ENCODE measurements at regions of chr15 and their contacts with region 1.

Region 1: DNA sequence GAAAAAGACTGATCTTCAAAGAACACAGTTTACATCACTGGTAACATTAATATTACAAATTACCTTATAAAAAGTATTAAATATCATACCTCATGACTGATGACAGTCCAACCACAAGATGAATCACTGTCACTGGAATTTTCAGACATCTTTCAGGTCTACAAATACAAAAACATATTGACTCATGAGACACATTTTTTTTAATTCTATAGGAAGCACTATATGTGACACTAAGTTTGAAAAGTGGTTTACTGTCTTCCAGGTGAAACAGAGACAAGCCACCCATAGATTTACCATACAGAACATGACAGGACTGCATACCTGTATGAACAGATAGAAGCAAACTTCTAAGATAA is 18.9 kb downstream of the CCPG1 start:
- DNase-seq: peak; percentile 45
- H3K4me3 Mint-ChIP-seq: no peak overlapping the region
- H3K27ac Mint-ChIP-seq: peak overlapping the region; percentile 75
- H3K4me1 Mint-ChIP-seq: peaks cover 14% of the 10 kb centered on the region
- H3K27me3 Mint-ChIP-seq: no peaks in the 10 kb centered on the region
- CTCF ChIP-seq: no peak

Region 2: DNA sequence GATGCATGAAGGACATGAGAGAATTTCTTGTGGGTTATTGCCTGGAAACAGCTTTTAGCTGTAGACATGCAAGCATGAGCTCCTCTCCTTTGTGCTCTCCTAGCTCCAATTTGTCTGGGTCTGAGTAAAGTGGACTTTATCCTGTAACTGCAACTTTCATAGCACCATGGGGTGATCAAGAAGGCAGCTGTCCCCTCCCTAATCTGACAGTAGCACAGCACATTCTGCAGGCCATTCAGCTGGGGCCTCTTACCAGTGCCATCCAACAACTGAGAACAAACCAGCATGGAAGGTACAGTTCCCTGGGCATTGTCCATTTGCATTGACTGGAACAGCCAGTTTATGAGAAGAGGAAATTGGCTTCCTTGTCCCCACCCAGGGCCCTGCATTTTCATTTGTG is 91.9 kb before region 1 on chr15:
- CTCF ChIA-PET with region 1: no interaction called
- POLR2A ChIA-PET with region 1: no interaction called
- intact Hi-C with region 1: no loop called
- DNase-seq: no peak
- H3K4me3 Mint-ChIP-seq: no peak overlapping the region
- H3K27ac Mint-ChIP-seq: no peak overlapping the region
- H3K4me1 Mint-ChIP-seq: no peaks in the 10 kb centered on the region
- H3K27me3 Mint-ChIP-seq: no peaks in the 10 kb centered on the region
- CTCF ChIP-seq: no peak

Region 3: GRCh38 chr15:55349282-55349681 is 40.0 kb before region 1 on chr15:
- CTCF ChIA-PET with region 1: no interaction called
- POLR2A ChIA-PET with region 1: no interaction called
- intact Hi-C with region 1: no loop called
- DNase-seq: no peak
- H3K4me3 Mint-ChIP-seq: no peak overlapping the region
- H3K27ac Mint-ChIP-seq: no peak overlapping the region
- H3K4me1 Mint-ChIP-seq: no peaks in the 10 kb centered on the region
- H3K27me3 Mint-ChIP-seq: no peaks in the 10 kb centered on the region
- CTCF ChIP-seq: no peak

Region 4: DNA sequence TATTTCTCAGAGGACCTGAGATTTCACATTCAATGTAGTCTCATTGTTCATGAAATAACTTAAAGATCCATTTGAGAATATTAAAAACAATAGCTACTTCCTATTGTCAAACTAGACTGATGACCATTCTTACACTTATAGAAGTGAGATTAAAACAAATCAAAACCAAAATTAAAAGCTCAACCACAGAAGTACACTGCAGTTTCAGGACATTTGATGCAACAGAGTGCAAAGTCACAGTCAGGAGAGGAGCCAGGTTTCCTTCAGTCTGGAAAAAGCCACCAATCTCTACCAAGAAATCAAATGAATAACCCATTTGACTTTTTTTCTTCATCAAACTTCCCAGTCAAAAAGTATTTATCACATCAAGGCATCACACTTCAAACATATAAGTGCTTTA is 13.5 kb after region 1 on chr15:
- CTCF ChIA-PET with region 1: interaction called, 16 read pairs
- POLR2A ChIA-PET with region 1: interaction called, 11 read pairs
- intact Hi-C with region 1: no loop called
- DNase-seq: no peak
- H3K4me3 Mint-ChIP-seq: no peak overlapping the region
- H3K27ac Mint-ChIP-seq: peak overlapping the region; percentile 85
- H3K4me1 Mint-ChIP-seq: peaks cover 29% of the 10 kb centered on the region
- H3K27me3 Mint-ChIP-seq: no peaks in the 10 kb centered on the region
- CTCF ChIP-seq: no peak

Region 5: DNA sequence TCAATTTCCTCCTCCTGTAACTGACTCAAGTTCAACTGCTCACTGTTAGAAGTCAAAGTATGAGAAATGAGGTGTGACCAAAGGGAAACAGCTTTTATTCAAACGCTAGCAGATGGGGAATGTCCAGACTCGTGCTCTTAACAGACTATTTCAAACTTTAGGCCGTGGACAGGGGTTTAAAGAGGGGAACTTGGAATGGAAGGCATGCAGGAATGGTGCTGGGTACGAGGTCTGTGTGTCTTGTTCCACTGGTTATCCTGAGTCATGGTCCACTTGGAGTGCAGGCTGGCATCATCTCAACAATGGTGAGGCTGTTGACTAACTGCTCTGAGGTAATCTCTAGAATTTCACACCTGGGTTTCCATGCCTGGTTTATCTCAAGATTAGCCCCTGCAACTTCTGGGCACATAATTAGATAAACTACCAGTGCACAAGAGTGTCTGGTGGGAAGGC is 141.6 kb after region 1 on chr15:
- CTCF ChIA-PET with region 1: no interaction called
- POLR2A ChIA-PET with region 1: no interaction called
- intact Hi-C with region 1: no loop called
- DNase-seq: peak; percentile 36
- H3K4me3 Mint-ChIP-seq: no peak overlapping the region
- H3K27ac Mint-ChIP-seq: no peak overlapping the region
- H3K4me1 Mint-ChIP-seq: no peaks in the 10 kb centered on the region
- H3K27me3 Mint-ChIP-seq: no peaks in the 10 kb centered on the region
- CTCF ChIP-seq: no peak

Measured in MCF 10A (cell line).